ENCODE measurements at regions of chr15 and their contacts with region 1.

Region 1: DNA sequence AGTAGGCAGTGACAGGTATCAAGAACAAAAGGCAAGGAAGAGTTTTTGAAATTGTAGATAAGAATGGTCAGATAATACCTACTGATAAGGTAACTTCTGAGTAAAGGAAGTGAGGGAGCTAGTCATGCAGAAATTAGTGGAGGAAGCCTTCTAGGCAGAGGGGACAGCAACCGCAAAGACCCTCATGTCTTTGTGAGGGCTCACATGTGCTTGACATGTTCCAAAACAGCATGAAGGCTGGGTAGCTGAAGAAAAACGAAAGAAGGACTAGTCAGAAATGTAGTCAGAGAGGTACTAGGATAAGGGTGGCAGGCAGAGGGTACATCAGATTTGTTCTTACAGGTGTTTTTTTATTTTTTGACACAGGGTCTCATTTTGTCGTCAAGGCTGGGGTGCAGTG is 5.3 kb downstream of the SIN3A start:
- DNase-seq: no peak
- H3K4me3 ChIP-seq: no peak overlapping the region
- H3K4me3 Mint-ChIP-seq: no peak overlapping the region
- H3K27ac ChIP-seq: no peak overlapping the region
- H3K27ac Mint-ChIP-seq: peak overlapping the region in 1 of 7 donors; percentile 74
- H3K4me1 ChIP-seq: peaks cover 28 to 36% of the 10 kb centered on the region in 2 donors
- H3K4me1 Mint-ChIP-seq: peaks cover 33% of the 10 kb centered on the region
- H3K27me3 ChIP-seq: no peaks in the 10 kb centered on the region
- H3K27me3 Mint-ChIP-seq: peaks cover 0 to 2% (median 0%) of the 10 kb centered on the region in 3 donors
- CTCF ChIP-seq: no peak

Region 2: GRCh38 chr15:73991726-73992593 is 1454.2 kb before region 1 on chr15 and contains the start of gene STOML1:
- intact Hi-C with region 1: loop called in 1 of 2 experiments (anchors 10 kb)
- DNase-seq: peak; percentile 90 to 91 (median 91)
- H3K4me3 ChIP-seq: peak within 1 kb of the TSS; percentile 59 to 91 (median 70)
- H3K4me3 Mint-ChIP-seq: peak within 1 kb of the TSS; percentile 83 to 90
- H3K27ac ChIP-seq: peak within 1 kb of the TSS in 1 of 2 donors; percentile 65
- H3K27ac Mint-ChIP-seq: peak within 1 kb of the TSS in 6 of 7 donors; percentile 46 to 80 (median 73)
- H3K4me1 ChIP-seq: peaks cover 40 to 52% of the 10 kb centered on the region in 2 donors
- H3K4me1 Mint-ChIP-seq: peaks cover 43% of the 10 kb centered on the region
- H3K27me3 ChIP-seq: no peaks in the 10 kb centered on the region
- H3K27me3 Mint-ChIP-seq: peaks cover 0 to 2% (median 0%) of the 10 kb centered on the region in 3 donors
- CTCF ChIP-seq: peak; percentile 97
- polyA plus RNA-seq, gene STOML1: 3.8 to 5.1 (median 4.7) TPM

Measured in CD14-positive monocyte (primary cell).